ENCODE measurements at regions of chr20 and their contacts with region 1.

Region 1: DNA sequence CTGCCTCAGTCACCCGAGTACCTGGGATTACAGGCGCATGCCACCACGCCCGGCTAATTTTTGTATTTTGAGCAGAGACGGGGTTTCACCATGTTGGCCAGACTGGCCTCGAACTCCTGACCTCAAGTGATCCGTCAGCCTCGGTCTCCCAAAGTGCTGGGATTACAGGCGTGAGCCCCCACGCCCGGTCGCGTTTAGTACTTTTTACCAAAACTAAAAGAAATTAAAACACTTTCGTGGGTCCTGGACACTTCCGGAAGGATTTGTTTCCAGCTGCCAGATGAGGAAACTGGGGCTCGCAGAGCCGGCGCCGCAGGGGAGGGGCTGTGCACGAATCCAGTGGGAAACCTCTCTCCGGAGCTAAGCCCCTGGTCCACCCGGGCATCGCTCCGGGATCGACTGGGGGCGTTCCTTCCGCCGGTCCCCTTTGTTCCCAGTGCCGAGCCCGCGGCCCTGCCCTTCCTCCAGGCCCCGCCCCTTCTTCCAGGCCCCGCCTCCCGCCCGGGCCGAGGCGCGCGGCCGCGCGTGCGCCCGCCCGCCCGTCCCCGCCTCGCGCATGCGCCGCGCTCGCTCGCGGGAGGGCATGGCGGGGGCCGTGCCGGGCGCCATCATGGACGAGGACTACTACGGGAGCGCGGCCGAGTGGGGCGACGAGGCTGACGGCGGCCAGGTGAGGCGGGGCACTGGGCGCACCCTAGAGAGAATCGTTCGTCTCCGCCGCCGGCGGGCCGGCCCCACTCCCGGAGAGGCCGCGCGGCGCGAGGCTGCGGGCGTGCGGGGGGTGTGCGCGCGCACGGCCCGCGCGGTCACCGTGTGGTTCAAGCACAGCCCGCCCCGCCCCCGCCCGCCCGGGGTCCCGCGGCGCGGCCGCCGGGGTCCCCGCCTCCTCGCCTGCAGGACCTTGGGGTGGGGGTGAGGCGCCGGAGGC is at the start of gene NELFCD:
- DNase-seq: peak; percentile 97
- H3K4me3 ChIP-seq: peak within 1 kb of the TSS; percentile 54 to 93 (median 74)
- H3K27ac ChIP-seq: peak within 1 kb of the TSS; percentile 80 to 95 (median 88)
- H3K4me1 ChIP-seq: peaks cover 25 to 54% (median 47%) of the 10 kb centered on the region in 6 donors
- H3K27me3 ChIP-seq: no peaks in the 10 kb centered on the region
- CTCF ChIP-seq: no peak
- POLR2A ChIP-seq: peak in 1 of 3 donors; percentile 27
- total RNA-seq, gene NELFCD: 56.1 to 78.3 (median 61.1) TPM

Region 2: DNA sequence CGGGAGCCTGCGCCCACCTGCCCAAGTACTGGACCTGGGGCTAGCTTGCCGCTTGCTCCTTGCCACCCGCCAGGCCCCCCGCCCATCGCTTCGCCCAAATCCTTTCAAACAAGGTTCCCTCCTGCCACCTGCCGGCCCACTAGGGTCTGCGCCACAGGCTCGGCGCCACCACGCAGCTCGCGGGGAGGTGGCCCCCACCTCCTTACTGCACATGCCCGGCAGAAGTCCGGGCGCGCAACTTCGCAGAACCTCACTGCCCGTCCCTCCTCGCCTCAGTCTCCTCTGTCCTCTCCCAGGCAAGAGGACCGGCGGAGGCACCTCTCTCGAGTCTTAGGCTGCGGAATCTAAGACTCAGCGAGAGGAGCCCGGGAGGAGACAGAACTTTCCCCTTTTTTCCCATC is 141.5 kb before region 1 on chr20:
- intact Hi-C with region 1: no loop called
- DNase-seq: peak; percentile 77
- H3K4me3 ChIP-seq: peak overlapping the region in 1 of 8 donors; percentile 47
- H3K27ac ChIP-seq: no peak overlapping the region
- H3K4me1 ChIP-seq: peaks cover 0 to 14% (median 10%) of the 10 kb centered on the region in 6 donors
- H3K27me3 ChIP-seq: peaks cover 2 to 87% (median 35%) of the 10 kb centered on the region in 7 donors
- CTCF ChIP-seq: peak in 7 of 11 experiments; percentile 25 to 60 (median 45)
- POLR2A ChIP-seq: no peak

Region 3: DNA sequence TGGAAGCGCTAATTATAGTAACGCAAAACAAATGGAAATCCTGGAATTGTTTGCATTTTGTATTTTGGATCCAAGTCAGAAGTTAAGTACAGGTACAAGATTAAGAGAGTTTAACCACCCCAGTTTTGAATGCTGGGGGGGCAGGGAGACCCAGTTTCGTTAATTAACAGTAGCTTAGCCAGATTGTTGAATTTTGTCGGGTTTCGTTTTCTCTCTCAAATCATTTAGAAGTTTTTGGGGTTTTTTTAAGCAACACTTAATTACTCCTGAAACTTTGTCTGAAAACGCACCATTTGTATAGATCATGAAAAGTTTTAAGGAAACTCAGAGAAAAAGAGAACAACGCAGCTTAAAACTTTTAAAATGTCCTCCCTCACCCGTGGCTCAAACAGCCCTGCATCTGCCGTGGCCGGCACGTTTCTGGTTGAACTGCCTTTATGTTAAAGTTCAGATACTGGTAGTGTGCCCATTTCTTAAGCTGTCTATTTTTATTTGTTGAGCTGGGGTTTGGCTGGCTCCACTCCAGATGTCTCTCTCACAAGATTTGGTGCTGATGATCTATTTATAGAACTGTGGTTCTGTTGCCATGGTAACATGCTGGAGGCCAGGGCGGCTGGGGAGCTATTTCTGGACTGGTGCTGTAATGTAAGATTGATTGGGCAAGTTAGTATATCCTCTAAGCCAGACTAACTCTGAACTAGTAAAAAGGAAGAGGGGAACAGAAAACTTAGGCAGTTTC is 73.4 kb before region 1 on chr20:
- intact Hi-C with region 1: loop called (anchors 10 kb)
- DNase-seq: peak; percentile 84
- H3K4me3 ChIP-seq: peak overlapping the region in 3 of 8 donors; percentile 1 to 48 (median 14)
- H3K27ac ChIP-seq: peak overlapping the region; percentile 67 to 86 (median 82)
- H3K4me1 ChIP-seq: peaks cover 31 to 93% (median 46%) of the 10 kb centered on the region in 6 donors
- H3K27me3 ChIP-seq: no peaks in the 10 kb centered on the region
- CTCF ChIP-seq: no peak
- POLR2A ChIP-seq: peak in 1 of 3 donors; percentile 34

Region 4: GRCh38 chr20:59032023-59032712 is 51.2 kb after region 1 on chr20 and contains the start of gene ATP5F1E:
- intact Hi-C with region 1: loop called (anchors 10 kb)
- DNase-seq: peak; percentile 98
- H3K4me3 ChIP-seq: peak within 1 kb of the TSS; percentile 62 to 97 (median 86)
- H3K27ac ChIP-seq: peak within 1 kb of the TSS; percentile 89 to 96 (median 92)
- H3K4me1 ChIP-seq: peaks cover 31 to 65% (median 54%) of the 10 kb centered on the region in 6 donors
- H3K27me3 ChIP-seq: no peaks in the 10 kb centered on the region
- CTCF ChIP-seq: no peak
- POLR2A ChIP-seq: peak; percentile 72 to 90 (median 85)
- total RNA-seq, gene ATP5F1E: 24.2 to 67.9 (median 63.4) TPM

Measured in spleen (tissue), 13 donors.